Caco-2 (cell line): ENCODE measurements at regions of chr1 and their contacts with region 1.

Region 1: DNA sequence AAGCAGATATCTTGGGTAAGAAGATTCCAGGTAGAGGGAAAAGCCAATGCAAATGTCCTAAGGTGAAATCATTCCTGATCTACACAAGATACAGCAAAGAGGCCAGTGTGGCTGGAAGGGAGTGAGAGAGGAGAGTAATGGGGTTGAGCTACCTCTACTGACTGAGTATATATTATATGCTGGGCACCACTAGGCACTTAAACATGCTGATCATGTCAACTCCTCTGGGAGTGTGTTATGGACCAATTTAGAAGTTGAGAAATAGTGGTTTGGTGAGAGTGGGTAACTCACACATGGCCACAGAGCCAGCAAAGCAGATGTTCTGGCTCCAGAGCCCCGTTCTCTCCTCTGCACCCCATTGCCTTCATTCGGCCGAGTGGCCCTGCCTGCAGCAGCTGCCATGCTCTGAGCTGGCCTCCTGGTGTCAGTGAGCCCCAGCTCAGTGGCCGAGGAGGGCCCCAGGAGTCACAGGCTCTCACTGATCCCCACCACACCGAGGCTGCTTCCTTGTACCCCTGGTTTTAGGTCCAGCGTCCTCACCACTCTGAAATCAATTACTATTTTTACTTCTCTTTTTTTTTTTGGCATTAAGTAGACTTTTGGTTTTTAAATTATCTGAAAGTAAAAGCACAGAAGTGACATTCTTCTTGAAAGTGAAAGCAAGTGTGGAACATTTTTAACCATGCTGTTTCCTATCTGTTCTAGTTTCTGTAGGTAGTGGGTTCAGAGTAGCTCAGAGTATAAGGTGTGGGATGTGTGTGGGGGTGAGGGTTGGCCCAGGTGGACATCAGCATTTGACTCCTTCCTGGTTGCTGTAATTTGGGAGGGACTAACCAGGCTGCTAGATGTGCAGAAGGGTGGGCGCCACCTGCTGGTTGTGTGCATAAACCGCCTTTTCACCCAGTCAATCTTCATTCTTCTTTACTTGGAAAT is 45.8 kb upstream of the CRNN start:
- DNase-seq: peak; percentile 63 to 73
- H3K4me3 ChIP-seq: no peak overlapping the region
- H3K4me3 Mint-ChIP-seq: no peak overlapping the region
- H3K27ac Mint-ChIP-seq: no peak overlapping the region
- H3K4me1 ChIP-seq: no peaks in the 10 kb centered on the region
- H3K4me1 Mint-ChIP-seq: no peaks in the 10 kb centered on the region
- H3K27me3 ChIP-seq: no peaks in the 10 kb centered on the region
- H3K27me3 Mint-ChIP-seq: no peaks in the 10 kb centered on the region
- CTCF ChIP-seq: peak; percentile 82 to 84

Region 2: DNA sequence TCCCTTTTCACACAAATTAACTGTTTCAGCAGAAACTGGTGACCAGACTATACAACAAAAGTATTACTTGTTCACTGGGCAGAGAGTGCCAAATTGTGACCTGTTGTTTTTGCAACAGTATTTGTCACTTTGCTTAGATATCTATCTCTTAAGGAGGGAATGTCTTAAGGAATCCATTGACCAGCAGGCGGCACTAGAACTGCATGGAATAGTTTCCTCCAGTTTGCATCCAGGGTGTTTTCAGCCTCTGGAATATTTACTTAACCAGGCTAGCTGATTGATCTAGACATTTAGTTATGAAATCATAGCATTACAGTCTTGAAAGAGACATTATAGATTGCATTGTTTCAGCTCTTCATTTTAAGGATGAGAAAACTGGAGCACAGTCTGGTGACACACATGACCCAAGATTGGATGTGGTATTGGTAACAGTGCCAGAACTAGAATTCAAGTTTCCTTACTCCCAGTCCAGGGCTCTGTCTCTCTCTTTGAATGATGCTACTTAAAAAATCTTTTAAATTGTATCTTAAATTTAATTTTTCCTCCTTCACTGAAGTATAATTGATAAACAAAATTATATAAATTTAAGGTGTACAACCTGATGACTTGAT is 317.8 kb before region 1 on chr1:
- CTCF ChIA-PET with region 1: interaction called, 6 read pairs
- POLR2A ChIA-PET with region 1: no interaction called
- intact Hi-C with region 1: loop called (anchors 1 kb)
- DNase-seq: peak; percentile 61 to 70
- H3K4me3 ChIP-seq: no peak overlapping the region
- H3K4me3 Mint-ChIP-seq: no peak overlapping the region
- H3K27ac Mint-ChIP-seq: no peak overlapping the region
- H3K4me1 ChIP-seq: no peaks in the 10 kb centered on the region
- H3K4me1 Mint-ChIP-seq: no peaks in the 10 kb centered on the region
- H3K27me3 ChIP-seq: no peaks in the 10 kb centered on the region
- H3K27me3 Mint-ChIP-seq: peaks cover 5% of the 10 kb centered on the region
- CTCF ChIP-seq: peak; percentile 81 to 89

Region 3: GRCh38 chr1:152347116-152347728 is 112.6 kb before region 1 on chr1:
- CTCF ChIA-PET with region 1: interaction called, 21 read pairs
- POLR2A ChIA-PET with region 1: no interaction called
- intact Hi-C with region 1: loop called (anchors 1 kb)
- DNase-seq: peak; percentile 42 to 72
- H3K4me3 ChIP-seq: no peak overlapping the region
- H3K4me3 Mint-ChIP-seq: no peak overlapping the region
- H3K27ac Mint-ChIP-seq: no peak overlapping the region
- H3K4me1 ChIP-seq: no peaks in the 10 kb centered on the region
- H3K4me1 Mint-ChIP-seq: no peaks in the 10 kb centered on the region
- H3K27me3 ChIP-seq: no peaks in the 10 kb centered on the region
- H3K27me3 Mint-ChIP-seq: peaks cover 5% of the 10 kb centered on the region
- CTCF ChIP-seq: peak; percentile 79 to 82

Region 4: GRCh38 chr1:152440635-152441471 is 19.0 kb before region 1 on chr1:
- CTCF ChIA-PET with region 1: interaction called, 26 read pairs
- POLR2A ChIA-PET with region 1: no interaction called
- intact Hi-C with region 1: loop called (anchors 1 kb)
- DNase-seq: peak; percentile 75 to 76
- H3K4me3 ChIP-seq: no peak overlapping the region
- H3K4me3 Mint-ChIP-seq: no peak overlapping the region
- H3K27ac Mint-ChIP-seq: no peak overlapping the region
- H3K4me1 ChIP-seq: no peaks in the 10 kb centered on the region
- H3K4me1 Mint-ChIP-seq: no peaks in the 10 kb centered on the region
- H3K27me3 ChIP-seq: no peaks in the 10 kb centered on the region
- H3K27me3 Mint-ChIP-seq: peaks cover 25% of the 10 kb centered on the region
- CTCF ChIP-seq: peak; percentile 68 to 81

Region 5: GRCh38 chr1:152497273-152497672 is 37.4 kb after region 1 on chr1:
- CTCF ChIA-PET with region 1: no interaction called
- POLR2A ChIA-PET with region 1: no interaction called
- intact Hi-C with region 1: no loop called
- DNase-seq: peak in 1 of 2 experiments; percentile 53
- H3K4me3 ChIP-seq: no peak overlapping the region
- H3K4me3 Mint-ChIP-seq: no peak overlapping the region
- H3K27ac Mint-ChIP-seq: no peak overlapping the region
- H3K4me1 ChIP-seq: peaks cover 13% of the 10 kb centered on the region
- H3K4me1 Mint-ChIP-seq: peaks cover 6% of the 10 kb centered on the region
- H3K27me3 ChIP-seq: no peaks in the 10 kb centered on the region
- H3K27me3 Mint-ChIP-seq: no peaks in the 10 kb centered on the region
- CTCF ChIP-seq: peak; percentile 63 to 68

Region 6: DNA sequence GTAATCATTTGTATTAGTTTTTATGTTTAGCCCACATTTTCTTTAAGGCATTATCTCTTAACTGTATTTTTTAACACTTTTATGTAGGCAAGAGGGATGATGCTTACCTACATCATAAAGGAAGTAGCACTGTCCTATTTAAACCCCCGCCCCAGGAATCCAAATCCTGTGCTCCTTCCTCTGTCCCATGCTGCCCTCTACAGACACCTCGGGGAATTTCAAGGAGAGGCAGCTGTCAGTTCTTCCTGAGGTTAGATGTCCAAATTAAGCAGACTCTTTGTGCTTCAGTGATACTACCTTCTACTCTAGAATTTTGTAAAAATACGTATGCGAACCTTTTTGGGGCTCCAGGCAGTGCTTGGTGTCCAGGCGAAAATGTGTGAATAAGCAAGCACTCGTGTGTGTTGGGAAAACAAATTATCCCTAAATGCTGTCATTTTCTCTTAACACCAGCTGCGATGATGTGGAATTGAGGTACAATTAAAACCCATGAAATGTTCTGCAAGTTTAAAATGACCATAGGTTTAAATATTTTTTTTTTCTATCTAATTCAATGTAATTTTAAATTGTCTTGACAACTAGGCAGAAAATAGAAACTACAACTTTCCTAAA is 73.6 kb after region 1 on chr1:
- CTCF ChIA-PET with region 1: interaction called, 17 read pairs
- POLR2A ChIA-PET with region 1: no interaction called
- intact Hi-C with region 1: loop called (anchors 1 kb)
- DNase-seq: peak; percentile 71 to 83
- H3K4me3 ChIP-seq: no peak overlapping the region
- H3K4me3 Mint-ChIP-seq: no peak overlapping the region
- H3K27ac Mint-ChIP-seq: no peak overlapping the region
- H3K4me1 ChIP-seq: no peaks in the 10 kb centered on the region
- H3K4me1 Mint-ChIP-seq: no peaks in the 10 kb centered on the region
- H3K27me3 ChIP-seq: no peaks in the 10 kb centered on the region
- H3K27me3 Mint-ChIP-seq: no peaks in the 10 kb centered on the region
- CTCF ChIP-seq: peak; percentile 89 to 95

Region 7: DNA sequence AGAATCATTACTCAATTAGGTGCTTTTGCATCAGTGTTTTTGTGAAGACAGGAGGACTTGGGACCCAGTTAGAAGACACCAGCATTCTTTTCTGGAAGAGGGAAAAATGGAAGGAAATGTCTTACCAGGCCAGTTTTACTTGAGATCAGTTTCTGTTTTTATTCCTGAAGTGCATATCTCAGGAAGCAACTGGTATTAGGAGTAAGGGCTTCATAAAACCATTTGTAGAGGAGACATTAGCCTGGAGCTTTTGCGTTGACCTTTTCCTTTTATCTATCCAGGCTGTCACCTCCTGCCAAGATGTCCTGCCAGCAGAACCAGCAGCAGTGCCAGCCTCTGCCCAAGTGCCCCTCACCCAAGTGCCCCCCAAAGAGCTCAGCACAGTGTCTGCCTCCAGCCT is 153.6 kb after region 1 on chr1 and contains the start of gene LCE3B:
- CTCF ChIA-PET with region 1: no interaction called
- POLR2A ChIA-PET with region 1: no interaction called
- intact Hi-C with region 1: no loop called
- DNase-seq: no peak
- H3K4me3 ChIP-seq: no peak within 1 kb of the TSS
- H3K4me3 Mint-ChIP-seq: no peak within 1 kb of the TSS
- H3K27ac Mint-ChIP-seq: no peak within 1 kb of the TSS
- H3K4me1 ChIP-seq: no peaks in the 10 kb centered on the region
- H3K4me1 Mint-ChIP-seq: no peaks in the 10 kb centered on the region
- H3K27me3 ChIP-seq: no peaks in the 10 kb centered on the region
- H3K27me3 Mint-ChIP-seq: peaks cover 2% of the 10 kb centered on the region
- CTCF ChIP-seq: no peak
- total RNA-seq, gene LCE3B: not detected in 2 replicates